H1 (cell line): ENCODE measurements at regions of chr3 and their contacts with region 1.

Region 1: GRCh38 chr3:55897573-55898224 is 410.6 kb upstream of the WNT5A start:
- DNase-seq: no peak
- H3K4me3 ChIP-seq: no peak overlapping the region
- H3K27ac ChIP-seq: no peak overlapping the region
- H3K4me1 ChIP-seq: peaks cover 0 to 6% (median under 1%) of the 10 kb centered on the region in 4 experiments; a peak in 3 of 7 replicates
- H3K27me3 ChIP-seq: no peaks in the 10 kb centered on the region
- CTCF ChIP-seq: peak in 2 of 3 experiments; percentile 67 to 69; a peak in 3 of 4 replicates
- EP300 ChIP-seq: no peak
- POLR2A ChIP-seq: no peak
- RAD21 ChIP-seq: peak; percentile 90 to 92

Region 2: GRCh38 chr3:55556619-55557537 is 340.8 kb before region 1 on chr3:
- CTCF ChIA-PET with region 1: no interaction called
- POLR2A ChIA-PET with region 1: no interaction called
- DNase-seq: no peak
- H3K4me3 ChIP-seq: no peak overlapping the region
- H3K27ac ChIP-seq: peak overlapping the region; percentile 25; the same call in 1 of the 2 replicates
- H3K4me1 ChIP-seq: peaks cover 13 to 28% (median 21%) of the 10 kb centered on the region in 4 experiments
- H3K27me3 ChIP-seq: no peaks in the 10 kb centered on the region
- CTCF ChIP-seq: no peak
- EP300 ChIP-seq: no peak
- POLR2A ChIP-seq: no peak
- RAD21 ChIP-seq: no peak

Region 3: GRCh38 chr3:55662683-55663082 is 235.0 kb before region 1 on chr3:
- CTCF ChIA-PET with region 1: no interaction called
- POLR2A ChIA-PET with region 1: no interaction called
- DNase-seq: no peak
- H3K4me3 ChIP-seq: no peak overlapping the region
- H3K27ac ChIP-seq: no peak overlapping the region
- H3K4me1 ChIP-seq: peaks cover 8 to 29% (median 19%) of the 10 kb centered on the region in 4 experiments
- H3K27me3 ChIP-seq: no peaks in the 10 kb centered on the region
- CTCF ChIP-seq: no peak
- EP300 ChIP-seq: no peak
- POLR2A ChIP-seq: no peak
- RAD21 ChIP-seq: no peak

Region 4: GRCh38 chr3:55879901-55880331 is 17.8 kb before region 1 on chr3:
- CTCF ChIA-PET with region 1: interaction called, 11 read pairs
- POLR2A ChIA-PET with region 1: no interaction called
- DNase-seq: no peak
- H3K4me3 ChIP-seq: no peak overlapping the region
- H3K27ac ChIP-seq: no peak overlapping the region
- H3K4me1 ChIP-seq: peaks cover 0 to 9% (median 6%) of the 10 kb centered on the region in 4 experiments; a peak in 3 of 7 replicates
- H3K27me3 ChIP-seq: no peaks in the 10 kb centered on the region
- CTCF ChIP-seq: no peak
- EP300 ChIP-seq: no peak
- POLR2A ChIP-seq: no peak
- RAD21 ChIP-seq: no peak